Mammary epithelial cell (primary cell): ENCODE measurements at regions of chr12 and their contacts with region 1.

Region 1: DNA sequence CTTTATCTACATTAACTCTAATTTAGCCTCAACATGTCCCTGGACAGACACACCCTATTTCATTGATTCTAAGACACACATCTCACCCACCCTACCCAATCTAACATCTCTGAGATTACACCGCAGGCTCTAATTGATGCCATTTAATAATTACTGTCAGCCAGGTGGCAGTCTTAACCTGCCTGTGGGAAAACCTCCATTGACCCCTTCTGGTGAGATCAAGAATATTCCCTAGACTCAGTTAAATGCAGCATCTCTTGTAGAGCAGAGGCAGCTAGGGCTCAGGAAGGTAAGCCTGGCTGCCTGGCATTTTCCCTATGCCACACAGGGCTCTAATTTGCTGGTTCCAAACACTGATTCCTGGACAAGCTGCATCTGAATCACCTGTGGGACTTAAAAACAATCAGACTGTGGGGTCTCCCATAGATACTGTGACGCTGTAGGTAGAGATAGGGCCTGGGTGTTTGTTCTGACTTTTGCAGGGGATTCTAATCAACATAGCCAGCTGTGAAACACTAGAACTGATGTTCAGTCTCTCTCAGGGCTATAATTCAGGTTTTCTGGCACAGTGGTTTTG is 14.3 kb downstream of the MCRS1 start:
- DNase-seq: peak; percentile 48
- H3K4me3 ChIP-seq: no peak overlapping the region
- H3K27ac ChIP-seq: no peak overlapping the region
- H3K4me1 ChIP-seq: peaks cover 13% of the 10 kb centered on the region
- H3K27me3 ChIP-seq: no peaks in the 10 kb centered on the region
- CTCF ChIP-seq: peak; percentile 78 to 85

Region 2: DNA sequence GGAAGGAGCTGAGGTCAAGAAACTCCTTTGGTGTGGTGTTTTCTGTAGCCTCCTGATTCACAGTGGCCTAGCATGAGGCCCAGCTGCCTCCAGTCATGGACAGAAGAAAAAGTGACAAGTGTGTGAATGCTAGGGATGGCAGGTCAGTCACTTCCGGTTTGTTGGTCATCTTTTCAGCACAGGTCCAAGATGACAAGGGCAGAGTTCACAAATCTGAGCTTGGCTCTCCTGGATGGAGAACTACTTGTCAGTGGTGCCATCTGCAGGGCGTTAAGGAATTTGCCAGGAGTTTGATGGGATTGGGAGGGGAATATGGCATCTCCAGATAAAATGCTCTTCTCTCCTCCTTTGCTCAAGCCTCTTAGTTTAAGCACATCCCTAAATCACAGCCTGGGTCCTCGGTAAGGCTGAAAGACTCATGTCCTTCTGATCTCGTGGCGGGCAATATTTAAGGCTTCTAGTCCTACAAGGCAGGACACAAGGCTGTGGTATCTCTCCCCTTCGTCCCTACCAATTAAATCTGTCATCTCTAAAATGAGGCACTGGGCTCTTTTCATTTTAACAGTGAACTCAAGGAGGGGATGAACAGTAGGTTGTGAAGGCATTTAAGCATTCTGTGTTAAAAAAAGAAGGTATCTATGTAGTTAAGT is 432.4 kb before region 1 on chr12:
- CTCF ChIA-PET with region 1: no interaction called
- dilution Hi-C with region 1: no loop called
- in situ Hi-C with region 1: no loop called
- intact Hi-C with region 1: no loop called
- DNase-seq: peak; percentile 41
- H3K4me3 ChIP-seq: no peak overlapping the region
- H3K27ac ChIP-seq: no peak overlapping the region
- H3K4me1 ChIP-seq: no peaks in the 10 kb centered on the region
- H3K27me3 ChIP-seq: no peaks in the 10 kb centered on the region
- CTCF ChIP-seq: peak; percentile 75 to 78

Region 3: DNA sequence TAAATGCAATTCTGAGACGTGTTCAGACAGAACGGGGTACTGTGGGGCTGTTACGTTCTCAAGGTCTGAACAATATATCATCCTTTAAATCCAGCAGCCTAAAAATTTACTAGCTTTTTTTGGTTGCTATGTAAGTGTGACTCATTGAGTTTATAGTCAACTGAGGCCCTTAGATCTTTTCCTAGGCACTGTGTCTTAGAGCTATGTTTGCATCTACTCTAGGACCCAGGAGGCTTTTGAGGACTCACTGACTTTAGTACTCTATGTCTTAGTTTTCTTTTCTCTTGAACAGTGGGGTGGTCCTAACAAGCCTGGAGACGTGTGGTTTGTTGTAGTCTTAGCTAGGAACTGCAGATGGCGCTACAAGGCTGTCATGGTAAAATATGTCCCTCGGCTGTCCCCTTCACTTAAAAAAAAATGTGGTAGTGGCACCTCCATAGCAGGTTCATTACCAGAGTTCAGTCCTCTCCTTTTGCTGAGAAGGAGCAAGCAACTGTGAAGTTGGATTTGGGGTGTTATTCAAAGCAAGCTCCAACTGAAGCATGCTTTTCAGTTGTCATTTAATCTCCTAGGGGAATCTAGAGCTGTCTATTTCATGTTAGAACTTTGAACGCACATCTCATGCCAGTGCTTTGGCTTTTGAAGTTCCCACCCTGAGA is 195.0 kb before region 1 on chr12:
- CTCF ChIA-PET with region 1: interaction called, 17 read pairs
- dilution Hi-C with region 1: no loop called
- in situ Hi-C with region 1: no loop called
- intact Hi-C with region 1: loop called (anchors 1 kb)
- DNase-seq: peak; percentile 71
- H3K4me3 ChIP-seq: no peak overlapping the region
- H3K27ac ChIP-seq: peak overlapping the region; percentile 20
- H3K4me1 ChIP-seq: peaks cover 23% of the 10 kb centered on the region
- H3K27me3 ChIP-seq: no peaks in the 10 kb centered on the region
- CTCF ChIP-seq: peak; percentile 66 to 84

Region 4: GRCh38 chr12:49664591-49665239 is 111.1 kb after region 1 on chr12:
- CTCF ChIA-PET with region 1: no interaction called
- dilution Hi-C with region 1: loop called (anchors 5 kb)
- in situ Hi-C with region 1: no loop called
- intact Hi-C with region 1: no loop called
- DNase-seq: no peak
- H3K4me3 ChIP-seq: no peak overlapping the region
- H3K27ac ChIP-seq: no peak overlapping the region
- H3K4me1 ChIP-seq: peaks cover 14% of the 10 kb centered on the region
- H3K27me3 ChIP-seq: no peaks in the 10 kb centered on the region
- CTCF ChIP-seq: no peak

Region 5: DNA sequence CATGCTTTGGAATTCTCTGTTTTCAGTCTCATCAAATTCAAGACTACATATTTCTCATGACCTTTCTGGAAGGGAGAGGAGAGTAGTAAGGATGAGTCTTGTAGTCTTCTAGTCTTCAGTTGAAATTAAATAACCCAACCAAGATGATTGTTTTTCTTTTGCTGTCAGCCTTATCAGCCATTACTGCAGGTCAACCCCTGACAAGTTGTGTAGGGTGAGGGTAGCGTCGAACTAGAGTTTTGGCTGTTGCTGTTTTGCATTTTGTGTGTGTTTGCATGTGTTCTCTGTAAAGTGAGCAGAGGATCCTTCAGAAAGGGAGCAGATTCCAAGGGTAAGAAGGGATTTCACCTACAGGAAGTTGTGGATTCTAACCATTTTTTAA is 979.6 kb after region 1 on chr12:
- CTCF ChIA-PET with region 1: no interaction called
- dilution Hi-C with region 1: no loop called
- in situ Hi-C with region 1: no loop called
- intact Hi-C with region 1: no loop called
- DNase-seq: no peak
- H3K4me3 ChIP-seq: no peak overlapping the region
- H3K27ac ChIP-seq: peak overlapping the region; percentile 98
- H3K4me1 ChIP-seq: peaks cover 53% of the 10 kb centered on the region
- H3K27me3 ChIP-seq: no peaks in the 10 kb centered on the region
- CTCF ChIP-seq: no peak